Activated naive CD8-positive, alpha-beta T cell treated with anti-CD3 and anti-CD28 coated beads, Interleukin-2, amount 10 ng/mL, durations not matched to agents 7 days and 5 days (primary cell): ENCODE measurements at regions of chr1 and their contacts with region 1.

Region 1: GRCh38 chr1:27556781-27557595 is 47.0 kb downstream of the AHDC1 start:
- DNase-seq: peak; percentile 75
- ATAC-seq: peak; percentile 53
- H3K4me3 Mint-ChIP-seq: peak overlapping the region; percentile 46
- H3K27ac Mint-ChIP-seq: peak overlapping the region; percentile 85
- H3K4me1 Mint-ChIP-seq: peaks cover 32% of the 10 kb centered on the region
- H3K27me3 Mint-ChIP-seq: no peaks in the 10 kb centered on the region

Region 2: DNA sequence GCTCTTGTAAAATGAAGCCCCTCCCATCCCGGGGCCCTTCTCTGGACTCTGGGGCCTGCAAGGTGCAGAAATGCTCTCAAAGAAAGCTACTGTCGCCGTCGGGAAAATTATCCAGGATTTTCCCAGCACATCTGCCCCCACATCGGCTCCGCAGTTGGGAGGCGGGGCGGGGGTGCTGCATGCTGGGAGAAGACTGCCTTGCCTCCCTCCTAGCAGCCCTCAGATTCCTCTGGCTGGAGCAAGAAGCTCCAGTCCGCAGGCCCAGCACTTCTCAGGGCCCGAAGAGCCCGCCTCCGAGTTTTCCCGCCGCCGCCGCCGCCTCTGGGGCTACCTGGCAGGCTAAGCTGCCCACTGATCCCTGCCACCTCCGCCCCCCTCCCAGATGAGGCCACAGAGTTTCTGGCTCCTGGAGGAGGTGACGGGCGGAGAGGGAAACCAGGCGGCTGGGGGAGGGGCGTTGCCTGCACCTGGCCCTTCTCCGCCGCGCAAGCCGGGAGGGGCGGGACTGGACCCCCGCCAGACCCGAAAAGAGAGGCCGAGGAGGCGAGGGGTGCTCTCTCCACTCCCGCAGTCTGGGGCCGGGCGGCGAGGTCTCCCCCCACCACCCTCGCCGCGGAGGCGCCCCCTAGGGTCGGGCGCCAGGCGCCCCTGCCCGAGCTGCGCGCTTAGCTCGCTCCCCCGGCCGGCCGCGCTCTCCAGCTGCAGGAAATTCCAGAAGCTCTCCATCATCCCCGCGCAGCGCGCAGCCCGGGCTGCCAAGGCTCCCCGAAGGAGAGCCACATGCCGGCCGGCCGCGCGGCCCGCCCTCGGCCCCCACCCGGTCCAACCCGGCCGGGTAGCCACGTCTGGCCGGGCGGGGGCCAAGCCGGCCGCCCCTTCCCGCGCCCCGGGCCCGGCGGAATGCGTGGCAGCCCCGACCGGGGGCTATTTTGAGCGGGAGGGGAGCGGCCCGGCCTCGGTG is 18.2 kb after region 1 on chr1:
- POLR2A ChIA-PET with region 1: no interaction called
- DNase-seq: no peak
- ATAC-seq: no peak
- H3K4me3 Mint-ChIP-seq: no peak overlapping the region
- H3K27ac Mint-ChIP-seq: no peak overlapping the region
- H3K4me1 Mint-ChIP-seq: peaks cover 8% of the 10 kb centered on the region
- H3K27me3 Mint-ChIP-seq: peaks cover 10% of the 10 kb centered on the region

Region 3: DNA sequence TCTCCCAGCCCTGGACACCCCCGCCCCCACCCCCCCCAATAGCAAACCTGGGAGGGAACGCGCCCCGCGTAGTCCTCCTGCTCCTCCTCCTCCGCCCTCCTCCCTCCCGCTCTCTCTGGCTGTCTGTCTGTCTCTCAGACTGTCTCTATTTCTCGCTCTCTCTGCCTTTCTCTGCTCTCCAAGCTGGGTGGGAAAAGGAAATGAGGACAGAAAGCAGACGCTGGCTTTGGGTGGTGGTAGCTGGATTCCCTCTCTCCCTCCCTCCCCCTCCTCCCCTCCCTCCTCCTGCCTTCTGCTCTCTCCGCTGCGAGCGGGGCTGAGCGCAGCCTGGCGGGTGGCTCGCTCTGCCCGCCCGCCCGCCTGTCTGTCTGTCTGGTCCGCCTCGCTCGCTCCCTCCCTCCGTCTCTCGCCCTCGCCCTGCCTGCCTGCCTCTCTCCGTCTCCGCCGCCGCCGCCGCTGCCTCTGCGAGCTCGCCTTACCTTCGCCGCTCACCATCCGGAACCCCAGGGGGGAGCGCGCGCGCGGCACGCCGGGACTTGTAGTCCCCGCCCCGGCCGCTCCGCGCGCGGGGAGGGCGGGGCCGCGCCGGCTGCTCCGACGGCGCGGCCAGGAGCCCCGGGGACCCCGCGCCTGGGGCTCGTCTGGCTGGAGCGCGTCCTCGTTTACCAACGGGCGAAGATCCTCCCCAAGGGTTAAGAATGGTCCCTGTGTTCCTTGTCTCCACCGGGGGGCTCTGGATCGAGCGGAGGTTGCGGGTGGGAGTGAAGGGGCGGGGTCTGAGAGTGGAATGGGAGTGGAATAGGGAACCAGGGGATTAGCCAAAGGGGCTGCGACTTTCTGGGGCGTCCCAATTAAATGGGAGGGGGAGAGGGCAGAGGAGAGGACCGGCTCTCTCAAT is 46.9 kb after region 1 on chr1 and contains the start of gene AHDC1:
- POLR2A ChIA-PET with region 1: interaction called, 21 read pairs
- DNase-seq: peak; percentile 95
- ATAC-seq: peak; percentile 79
- H3K4me3 Mint-ChIP-seq: peak within 1 kb of the TSS; percentile 96
- H3K27ac Mint-ChIP-seq: peak within 1 kb of the TSS; percentile 89
- H3K4me1 Mint-ChIP-seq: peaks cover 34% of the 10 kb centered on the region
- H3K27me3 Mint-ChIP-seq: no peaks in the 10 kb centered on the region
- total RNA-seq, gene AHDC1: 21.6 to 22.2 TPM